ENCODE measurements at regions of chr4 and their contacts with region 1.

Region 1: DNA sequence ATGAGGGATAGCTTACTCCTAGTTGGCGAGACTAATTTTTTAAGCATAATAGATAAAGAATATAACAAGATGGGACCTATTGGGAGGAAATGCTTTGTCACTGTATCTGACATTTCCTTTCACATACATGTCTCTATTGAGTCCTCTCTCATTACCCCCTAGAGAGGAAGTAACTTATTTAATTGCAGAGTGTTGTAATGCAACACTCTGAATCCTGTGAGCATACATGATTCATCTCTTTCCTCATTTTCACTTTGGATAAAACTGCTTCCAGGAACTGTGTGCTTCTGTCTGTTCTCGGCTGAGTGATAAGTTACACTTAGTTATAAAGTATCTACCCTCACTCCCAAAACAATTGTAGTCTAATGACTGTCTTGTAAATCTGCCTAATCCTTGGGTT is 266.1 kb upstream of the ANXA10 start:
- DNase-seq: no peak
- H3K4me3 ChIP-seq: no peak overlapping the region
- H3K27ac ChIP-seq: no peak overlapping the region
- H3K4me1 ChIP-seq: no peaks in the 10 kb centered on the region
- H3K27me3 ChIP-seq: no peaks in the 10 kb centered on the region
- CTCF ChIP-seq: no peak
- EP300 ChIP-seq: no peak
- POLR2A ChIP-seq: no peak

Region 2: GRCh38 chr4:167041524-167041923 is 784.8 kb before region 1 on chr4:
- intact Hi-C with region 1: no loop called
- DNase-seq: no peak
- H3K4me3 ChIP-seq: no peak overlapping the region
- H3K27ac ChIP-seq: no peak overlapping the region
- H3K4me1 ChIP-seq: no peaks in the 10 kb centered on the region
- H3K27me3 ChIP-seq: no peaks in the 10 kb centered on the region
- CTCF ChIP-seq: no peak
- EP300 ChIP-seq: no peak
- POLR2A ChIP-seq: no peak

Region 3: DNA sequence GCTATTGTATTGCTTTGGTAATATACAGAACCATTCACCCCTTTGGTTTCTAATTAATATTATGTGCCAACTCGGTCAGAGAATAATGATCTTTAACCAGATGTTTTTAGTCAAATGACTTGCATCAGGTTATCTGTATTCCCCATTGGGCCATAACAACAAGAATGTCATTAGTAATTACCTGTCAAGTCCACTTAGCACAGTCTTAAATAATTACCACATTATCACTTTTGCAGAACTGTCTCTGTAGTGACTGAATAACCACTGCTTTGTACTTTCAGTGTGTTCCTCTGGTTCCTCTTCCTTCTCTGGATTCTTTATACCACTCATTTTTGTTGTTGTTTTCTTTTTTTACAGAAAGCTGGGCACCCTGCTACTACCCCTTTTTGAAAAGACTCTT is 334.3 kb before region 1 on chr4:
- intact Hi-C with region 1: loop called in 1 of 4 experiments (anchors 5 kb)
- DNase-seq: no peak
- H3K4me3 ChIP-seq: no peak overlapping the region
- H3K27ac ChIP-seq: no peak overlapping the region
- H3K4me1 ChIP-seq: no peaks in the 10 kb centered on the region
- H3K27me3 ChIP-seq: no peaks in the 10 kb centered on the region
- CTCF ChIP-seq: no peak
- EP300 ChIP-seq: no peak
- POLR2A ChIP-seq: no peak

Region 4: GRCh38 chr4:167867191-167867590 is 40.9 kb after region 1 on chr4:
- intact Hi-C with region 1: no loop called
- DNase-seq: no peak
- H3K4me3 ChIP-seq: no peak overlapping the region
- H3K27ac ChIP-seq: no peak overlapping the region
- H3K4me1 ChIP-seq: no peaks in the 10 kb centered on the region
- H3K27me3 ChIP-seq: no peaks in the 10 kb centered on the region
- CTCF ChIP-seq: no peak
- EP300 ChIP-seq: no peak
- POLR2A ChIP-seq: no peak

Region 5: GRCh38 chr4:168045354-168045753 is 219.1 kb after region 1 on chr4:
- intact Hi-C with region 1: no loop called
- DNase-seq: no peak
- H3K4me3 ChIP-seq: no peak overlapping the region
- H3K27ac ChIP-seq: no peak overlapping the region
- H3K4me1 ChIP-seq: no peaks in the 10 kb centered on the region
- H3K27me3 ChIP-seq: peaks cover 2% of the 10 kb centered on the region
- CTCF ChIP-seq: no peak
- EP300 ChIP-seq: no peak
- POLR2A ChIP-seq: no peak

Measured in ovary (tissue), 10 donors.